ENCODE measurements at regions of chr15 and their contacts with region 1.

Region 1: DNA sequence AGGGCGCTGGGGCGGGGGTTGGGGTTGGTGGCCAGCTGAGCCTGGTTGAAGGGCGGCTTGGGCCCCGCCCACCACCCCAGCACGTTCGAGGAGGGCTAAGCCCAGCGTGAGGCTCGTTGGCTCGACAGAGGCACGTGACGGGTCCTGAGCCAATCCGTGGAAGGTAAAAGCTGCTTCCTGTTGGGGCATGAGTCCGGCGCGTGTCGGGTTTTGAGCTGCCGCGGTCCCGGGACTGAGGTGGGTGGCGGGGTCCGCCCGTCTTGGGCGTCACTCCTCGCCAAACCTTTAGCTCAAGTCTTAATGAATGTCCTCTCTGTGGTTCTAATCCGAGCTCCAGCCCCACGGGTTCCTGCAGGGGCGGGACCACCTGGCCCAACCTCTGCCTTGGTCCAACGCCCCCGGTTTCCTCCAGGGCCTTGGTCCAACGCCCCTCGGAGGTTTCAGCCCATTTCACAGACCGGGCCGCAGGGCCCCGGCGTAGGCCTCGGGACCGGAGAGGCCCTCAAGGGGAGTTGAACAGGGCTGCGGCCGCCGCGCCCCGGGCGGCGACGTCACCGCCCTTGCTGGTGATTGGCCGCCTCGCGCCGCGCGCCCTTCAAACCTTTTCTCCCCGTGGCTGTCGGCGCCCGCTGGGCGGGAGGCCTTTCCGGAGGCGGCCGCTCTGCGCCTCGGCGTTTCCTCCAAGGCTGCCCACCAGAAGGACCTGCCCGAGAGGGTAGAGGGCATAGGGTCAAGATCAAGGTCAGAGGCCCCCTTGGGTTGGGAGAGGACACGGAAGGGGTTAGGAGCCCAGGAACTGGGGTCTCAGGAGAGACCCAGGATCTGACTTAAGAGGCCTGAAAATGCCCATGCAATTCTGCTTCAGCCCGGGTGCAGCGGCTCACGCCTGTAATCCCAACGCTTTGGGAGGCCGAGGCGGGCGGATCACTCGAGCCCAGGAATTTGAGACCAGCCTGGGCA is at the start of gene RCCD1:
- DNase-seq: peak; percentile 96
- H3K4me3 Mint-ChIP-seq: peak within 1 kb of the TSS; percentile 85
- H3K27ac Mint-ChIP-seq: peak within 1 kb of the TSS; percentile 96
- H3K4me1 Mint-ChIP-seq: peaks cover 27% of the 10 kb centered on the region
- H3K27me3 Mint-ChIP-seq: no peaks in the 10 kb centered on the region

Region 2: GRCh38 chr15:90553248-90553745 is 401.7 kb before region 1 on chr15:
- CTCF ChIA-PET with region 1: no interaction called
- DNase-seq: no peak
- H3K4me3 Mint-ChIP-seq: no peak overlapping the region
- H3K27ac Mint-ChIP-seq: no peak overlapping the region
- H3K4me1 Mint-ChIP-seq: peaks cover 63% of the 10 kb centered on the region
- H3K27me3 Mint-ChIP-seq: no peaks in the 10 kb centered on the region

Region 3: DNA sequence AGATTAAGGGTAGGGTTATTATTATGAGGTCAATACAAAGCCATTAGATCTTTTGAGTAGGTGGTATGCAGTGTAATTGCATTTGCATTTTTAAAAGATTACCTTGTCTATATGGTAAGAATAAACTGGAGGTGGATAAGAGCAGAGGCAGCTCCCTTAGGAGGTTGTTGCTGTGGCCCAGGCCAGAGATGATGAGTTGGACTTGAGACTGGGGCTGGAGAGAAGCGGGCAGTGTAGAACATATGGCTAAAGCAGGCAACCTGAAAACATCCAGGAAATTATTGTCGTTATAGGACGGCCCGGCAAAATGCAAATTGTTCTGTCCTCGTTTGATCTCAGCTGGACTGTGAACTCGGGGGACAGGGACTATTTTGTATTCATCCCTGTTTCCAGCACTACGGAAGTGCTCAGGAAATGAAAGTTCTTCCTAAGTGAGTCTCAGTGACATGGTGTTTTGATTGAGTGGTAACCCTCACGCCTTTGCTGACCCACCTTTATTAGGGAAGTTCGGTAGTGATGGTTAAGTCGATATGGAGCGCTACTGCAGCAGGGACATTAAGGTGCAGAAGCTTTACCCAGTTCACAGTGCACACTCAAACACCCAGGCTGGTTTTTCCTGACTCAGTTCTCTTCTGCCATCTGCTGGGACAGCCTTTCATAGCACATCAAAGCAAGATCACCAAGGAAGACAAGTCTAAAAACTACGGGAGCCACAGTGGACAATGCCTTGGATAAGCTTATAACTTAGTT is 94.6 kb after region 1 on chr15:
- CTCF ChIA-PET with region 1: interaction called, 44 read pairs
- DNase-seq: peak; percentile 76
- H3K4me3 Mint-ChIP-seq: no peak overlapping the region
- H3K27ac Mint-ChIP-seq: no peak overlapping the region
- H3K4me1 Mint-ChIP-seq: peaks cover 25% of the 10 kb centered on the region
- H3K27me3 Mint-ChIP-seq: peaks cover 45% of the 10 kb centered on the region

Region 4: DNA sequence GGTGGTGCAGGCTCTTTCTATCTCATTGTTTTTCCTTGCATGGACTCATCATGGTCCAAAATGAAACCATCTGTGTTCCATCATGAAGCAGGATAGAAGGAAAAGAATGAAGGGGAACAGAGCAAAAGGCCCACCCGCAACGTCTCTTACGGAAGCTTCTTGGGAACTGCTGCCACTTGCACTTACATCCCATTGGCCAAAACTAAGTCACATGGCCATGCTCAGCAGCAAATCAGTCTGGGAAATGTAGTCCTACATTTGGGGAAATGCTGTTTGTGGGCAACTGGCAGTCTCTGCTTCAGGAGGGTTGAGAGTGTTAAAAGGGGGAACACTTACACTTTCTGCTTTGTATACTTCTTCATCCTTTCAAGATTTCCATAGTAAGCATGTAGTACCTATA is 336.7 kb after region 1 on chr15:
- CTCF ChIA-PET with region 1: no interaction called
- DNase-seq: no peak
- H3K4me3 Mint-ChIP-seq: no peak overlapping the region
- H3K27ac Mint-ChIP-seq: no peak overlapping the region
- H3K4me1 Mint-ChIP-seq: no peaks in the 10 kb centered on the region
- H3K27me3 Mint-ChIP-seq: peaks cover 42% of the 10 kb centered on the region

Measured in activated naive CD4-positive, alpha-beta T cell treated with anti-CD3 and anti-CD28 coated beads, Interleukin-2, amount 10 ng/mL, durations not matched to agents 7 days and 5 days (primary cell).